Activated T-helper 1 cell treated with anti-CD3 and anti-CD28 coated beads, Interleukin-12 subunit alpha, Interleukin-12 subunit beta, Interleukin-2, Interleukin-4 antibody, amounts not matched to agents 30 ng/mL and 10 ng/mL and 1 ng/mL, durations not matched to agents 14 hours and 24 hours and 36 hours (primary cell): ENCODE measurements at regions of chr16 and their contacts with region 1.

Region 1: DNA sequence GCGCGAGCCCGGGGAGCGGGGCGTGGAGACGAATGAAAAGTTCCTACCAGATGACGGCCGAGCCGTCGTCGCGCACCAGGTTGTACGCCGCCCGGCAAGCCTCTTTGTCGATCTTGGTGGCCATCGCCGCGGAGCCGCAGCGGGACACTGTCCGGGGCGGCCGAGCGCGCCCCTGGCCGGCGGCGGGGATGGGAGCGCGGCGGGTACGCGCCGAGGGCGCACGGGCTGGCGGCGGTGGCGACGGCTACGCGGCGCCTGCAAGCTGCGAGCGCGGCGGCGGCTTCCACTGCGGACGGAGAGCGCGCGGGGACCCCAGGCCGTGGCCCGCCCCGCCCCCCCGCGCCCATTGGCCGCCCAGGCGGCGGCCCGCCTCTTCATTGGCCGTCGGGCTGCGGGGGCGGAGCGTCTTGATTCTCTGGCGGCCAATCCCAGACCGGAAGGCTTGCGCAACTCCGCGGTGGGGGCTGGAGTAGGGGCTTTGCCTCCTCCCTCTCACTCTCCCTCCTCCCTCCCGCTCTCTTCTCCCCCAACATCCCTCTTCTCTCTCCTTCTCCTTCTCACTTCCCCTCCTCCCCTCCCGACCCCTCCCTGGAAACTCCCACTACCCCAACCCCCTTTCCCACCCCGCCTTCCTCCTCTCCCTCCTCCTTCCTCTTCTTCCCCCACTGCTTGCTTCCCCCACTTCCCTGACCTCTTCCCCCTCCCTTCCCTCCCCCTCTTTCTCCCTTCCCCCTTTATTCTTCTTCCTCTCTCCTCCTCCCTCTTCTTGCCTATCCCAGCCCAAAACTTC is at the start of gene COTL1:
- DNase-seq: peak; percentile 92
- H3K4me3 Mint-ChIP-seq: peak within 1 kb of the TSS; percentile 96
- H3K27ac Mint-ChIP-seq: peak within 1 kb of the TSS; percentile 84
- H3K4me1 Mint-ChIP-seq: peaks cover 62% of the 10 kb centered on the region
- H3K27me3 Mint-ChIP-seq: peaks cover 2% of the 10 kb centered on the region
- total RNA-seq, gene COTL1: 531 and 535 TPM in 2 replicates

Region 2: GRCh38 chr16:84504420-84505248 is 113.4 kb before region 1 on chr16 and contains the start of gene MEAK7:
- intact Hi-C with region 1: loop called (anchors 1 kb)
- DNase-seq: peak; percentile 97
- H3K4me3 Mint-ChIP-seq: peak within 1 kb of the TSS; percentile 85
- H3K27ac Mint-ChIP-seq: peak within 1 kb of the TSS; percentile 81
- H3K4me1 Mint-ChIP-seq: peaks cover 46% of the 10 kb centered on the region
- H3K27me3 Mint-ChIP-seq: no peaks in the 10 kb centered on the region
- total RNA-seq, gene MEAK7: 10.6 and 10.9 TPM in 2 replicates

Region 3: DNA sequence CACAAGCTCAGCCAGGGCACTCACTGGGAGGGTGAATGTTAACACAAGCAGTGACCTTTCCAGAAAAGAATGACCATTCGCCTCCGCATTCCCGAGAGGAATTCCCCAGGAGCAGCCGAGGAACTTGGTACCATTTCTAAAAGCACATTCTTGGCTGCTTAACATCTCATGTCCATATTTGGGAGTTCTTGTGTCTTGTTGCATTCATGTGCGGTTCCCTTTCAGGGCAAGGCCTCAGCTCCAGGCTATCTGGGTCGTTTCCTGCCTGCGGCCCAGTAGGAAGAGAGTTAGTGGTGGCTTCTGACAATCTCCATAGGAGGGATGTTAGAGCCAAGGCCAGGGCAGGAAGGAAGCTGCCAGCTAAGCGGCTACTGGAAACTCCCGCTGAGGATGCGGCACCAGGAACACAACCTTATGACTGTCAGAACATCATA is 85.7 kb before region 1 on chr16:
- intact Hi-C with region 1: no loop called
- DNase-seq: no peak
- H3K4me3 Mint-ChIP-seq: no peak overlapping the region
- H3K27ac Mint-ChIP-seq: peak overlapping the region; percentile 48
- H3K4me1 Mint-ChIP-seq: peaks cover 18% of the 10 kb centered on the region
- H3K27me3 Mint-ChIP-seq: no peaks in the 10 kb centered on the region

Region 4: GRCh38 chr16:84548971-84549844 is 68.8 kb before region 1 on chr16:
- intact Hi-C with region 1: loop called (anchors 1 kb)
- DNase-seq: peak; percentile 30
- H3K4me3 Mint-ChIP-seq: peak overlapping the region; percentile 87
- H3K27ac Mint-ChIP-seq: peak overlapping the region; percentile 96
- H3K4me1 Mint-ChIP-seq: peaks cover 72% of the 10 kb centered on the region
- H3K27me3 Mint-ChIP-seq: no peaks in the 10 kb centered on the region

Region 5: DNA sequence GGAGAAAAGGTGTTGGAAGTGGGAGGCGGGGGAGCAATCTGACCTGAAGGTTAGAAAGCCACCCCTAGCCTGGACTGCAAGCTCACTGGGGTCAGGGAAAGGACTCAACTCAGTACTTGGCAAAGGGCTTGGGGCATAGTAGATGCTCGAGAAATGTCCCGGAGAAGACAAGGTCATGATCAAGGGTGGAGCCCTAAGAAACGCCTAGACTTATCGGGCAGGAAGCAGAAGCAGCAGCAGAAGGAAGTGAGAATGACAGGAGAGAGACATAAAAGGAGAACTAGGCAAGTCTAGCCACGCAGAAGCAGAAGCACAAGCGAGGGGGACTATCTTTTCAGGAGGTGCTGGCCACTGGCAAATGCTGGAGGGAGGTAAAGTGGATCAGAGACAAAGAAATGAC is 10.3 kb before region 1 on chr16:
- intact Hi-C with region 1: loop called (anchors 1 kb)
- DNase-seq: no peak
- H3K4me3 Mint-ChIP-seq: peak overlapping the region; percentile 75
- H3K27ac Mint-ChIP-seq: peak overlapping the region; percentile 80
- H3K4me1 Mint-ChIP-seq: peaks cover 90% of the 10 kb centered on the region
- H3K27me3 Mint-ChIP-seq: no peaks in the 10 kb centered on the region

Region 6: GRCh38 chr16:84643180-84643583 is 25.2 kb after region 1 on chr16:
- intact Hi-C with region 1: no loop called
- DNase-seq: no peak
- H3K4me3 Mint-ChIP-seq: no peak overlapping the region
- H3K27ac Mint-ChIP-seq: no peak overlapping the region
- H3K4me1 Mint-ChIP-seq: peaks cover 44% of the 10 kb centered on the region
- H3K27me3 Mint-ChIP-seq: peaks cover 21% of the 10 kb centered on the region

Region 7: GRCh38 chr16:84726079-84726668 is 108.2 kb after region 1 on chr16:
- intact Hi-C with region 1: loop called (anchors 1 kb)
- DNase-seq: peak; percentile 62
- H3K4me3 Mint-ChIP-seq: peak overlapping the region; percentile 45
- H3K27ac Mint-ChIP-seq: no peak overlapping the region
- H3K4me1 Mint-ChIP-seq: peaks cover 79% of the 10 kb centered on the region
- H3K27me3 Mint-ChIP-seq: no peaks in the 10 kb centered on the region

Region 8: GRCh38 chr16:84952335-84953189 is 334.6 kb after region 1 on chr16:
- intact Hi-C with region 1: loop called (anchors 1 kb)
- DNase-seq: peak; percentile 55
- H3K4me3 Mint-ChIP-seq: no peak overlapping the region
- H3K27ac Mint-ChIP-seq: no peak overlapping the region
- H3K4me1 Mint-ChIP-seq: no peaks in the 10 kb centered on the region
- H3K27me3 Mint-ChIP-seq: no peaks in the 10 kb centered on the region